ENCODE measurements at regions of chr3 and their contacts with region 1.

Region 1: GRCh38 chr3:54870423-54870822 is 57.4 kb downstream of the LRTM1 start:
- DNase-seq: peak; percentile 97
- ATAC-seq: peak; percentile 98
- H3K4me3 ChIP-seq: no peak overlapping the region
- H3K27ac ChIP-seq: peak overlapping the region; percentile 70
- H3K4me1 ChIP-seq: peaks cover 3% of the 10 kb centered on the region
- H3K27me3 ChIP-seq: no peaks in the 10 kb centered on the region
- CTCF ChIP-seq: peak; percentile 88
- POLR2A ChIP-seq: peak; percentile 40; the same call in 1 of the 2 replicates
- RAD21 ChIP-seq: peak; percentile 92

Region 2: DNA sequence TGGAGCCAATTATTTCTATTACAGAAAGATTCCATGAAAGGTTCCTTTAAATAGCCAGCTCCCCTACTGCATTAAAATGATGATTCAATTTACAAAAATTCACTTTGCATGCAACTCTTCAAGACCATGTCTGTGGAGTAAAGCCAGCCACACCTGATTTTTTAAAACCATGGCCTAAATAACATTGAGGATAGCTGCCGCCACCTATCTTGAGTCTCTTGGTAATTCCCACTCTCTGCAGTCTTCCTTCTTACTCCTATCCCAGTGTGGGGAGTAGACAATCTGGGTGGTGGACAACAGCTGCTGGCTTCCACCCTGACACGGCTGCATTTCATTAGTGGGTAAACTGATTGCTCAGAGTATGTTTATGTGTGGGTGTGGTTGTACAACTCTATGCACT is 46.8 kb after region 1 on chr3:
- CTCF ChIA-PET with region 1: no interaction called
- POLR2A ChIA-PET with region 1: no interaction called
- dilution Hi-C with region 1: no loop called
- in situ Hi-C with region 1: no loop called
- intact Hi-C with region 1: no loop called
- DNase-seq: peak; percentile 41
- ATAC-seq: peak; percentile 14; the same call in 1 of the 2 replicates
- H3K4me3 ChIP-seq: no peak overlapping the region
- H3K27ac ChIP-seq: no peak overlapping the region
- H3K4me1 ChIP-seq: peaks cover 5% of the 10 kb centered on the region; the same call in 1 of the 2 replicates
- H3K27me3 ChIP-seq: no peaks in the 10 kb centered on the region
- CTCF ChIP-seq: no peak
- POLR2A ChIP-seq: no peak
- RAD21 ChIP-seq: no peak

Region 3: DNA sequence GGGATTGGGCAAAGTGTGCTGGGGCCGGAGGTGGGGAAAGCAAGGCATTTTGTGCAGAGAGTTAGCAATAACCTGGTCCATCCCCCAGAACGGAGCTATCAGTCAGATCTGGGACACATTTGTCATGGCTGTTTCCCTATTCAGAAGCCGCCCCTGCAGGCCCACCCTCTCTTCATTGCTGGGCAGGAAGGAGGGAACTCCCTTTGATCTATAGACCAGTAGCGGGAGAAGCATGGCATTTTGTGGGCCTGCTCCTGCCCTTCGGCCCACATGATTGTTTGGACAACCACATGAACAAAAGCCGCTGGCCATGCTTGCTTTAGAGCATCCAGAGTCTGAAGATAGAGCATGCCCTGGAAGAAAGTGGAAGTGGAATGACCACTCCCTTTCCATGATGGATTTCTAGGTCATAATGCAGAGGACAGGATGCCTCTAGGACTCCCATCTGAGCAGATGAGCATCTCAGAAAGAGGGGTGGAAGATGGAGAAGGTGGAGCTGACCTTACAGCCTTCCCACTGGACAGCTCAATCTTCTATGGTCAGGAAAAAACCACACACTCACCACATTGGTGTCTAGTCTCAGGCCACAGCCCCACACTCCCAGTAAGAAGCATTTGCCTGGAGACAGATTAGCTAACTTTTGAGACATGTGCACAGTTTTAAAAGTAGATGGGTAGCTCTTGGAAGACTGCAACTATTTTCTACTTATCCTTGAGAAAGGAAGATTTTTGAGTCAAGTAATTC is 69.3 kb after region 1 on chr3:
- CTCF ChIA-PET with region 1: no interaction called
- POLR2A ChIA-PET with region 1: no interaction called
- dilution Hi-C with region 1: no loop called
- in situ Hi-C with region 1: loop called (anchors 5 kb)
- intact Hi-C with region 1: no loop called
- DNase-seq: peak; percentile 60
- ATAC-seq: peak; percentile 62
- H3K4me3 ChIP-seq: no peak overlapping the region
- H3K27ac ChIP-seq: no peak overlapping the region
- H3K4me1 ChIP-seq: no peaks in the 10 kb centered on the region
- H3K27me3 ChIP-seq: no peaks in the 10 kb centered on the region; the same call in 1 of the 2 replicates
- CTCF ChIP-seq: no peak
- POLR2A ChIP-seq: no peak
- RAD21 ChIP-seq: no peak

Region 4: GRCh38 chr3:55042591-55042990 is 172.2 kb after region 1 on chr3:
- CTCF ChIA-PET with region 1: no interaction called
- POLR2A ChIA-PET with region 1: no interaction called
- dilution Hi-C with region 1: no loop called
- in situ Hi-C with region 1: no loop called
- intact Hi-C with region 1: loop called (anchors 10 kb)
- DNase-seq: peak; percentile 30
- ATAC-seq: peak; percentile 40; the same call in 1 of the 2 replicates
- H3K4me3 ChIP-seq: no peak overlapping the region
- H3K27ac ChIP-seq: no peak overlapping the region
- H3K4me1 ChIP-seq: no peaks in the 10 kb centered on the region
- H3K27me3 ChIP-seq: no peaks in the 10 kb centered on the region
- CTCF ChIP-seq: peak; percentile 41
- POLR2A ChIP-seq: no peak
- RAD21 ChIP-seq: peak; percentile 73

Region 5: GRCh38 chr3:55305696-55306485 is 435.5 kb after region 1 on chr3:
- CTCF ChIA-PET with region 1: no interaction called
- POLR2A ChIA-PET with region 1: no interaction called
- dilution Hi-C with region 1: no loop called
- in situ Hi-C with region 1: no loop called
- intact Hi-C with region 1: loop called (anchors 10 kb)
- DNase-seq: peak; percentile 57
- ATAC-seq: peak; percentile 77
- H3K4me3 ChIP-seq: no peak overlapping the region
- H3K27ac ChIP-seq: peak overlapping the region; percentile 67; the same call in 1 of the 2 replicates
- H3K4me1 ChIP-seq: peaks cover 3% of the 10 kb centered on the region; the same call in 1 of the 2 replicates
- H3K27me3 ChIP-seq: no peaks in the 10 kb centered on the region
- CTCF ChIP-seq: no peak
- POLR2A ChIP-seq: no peak
- RAD21 ChIP-seq: no peak